Heart left ventricle (tissue), 16 donors: ENCODE measurements at regions of chr1 and their contacts with region 1.

Region 1: GRCh38 chr1:185984113-185984836 is 250.1 kb downstream of the HMCN1 start:
- DNase-seq: peak in 1 of 5 donors; percentile 11
- ATAC-seq: peak; percentile 69 to 92 (median 87)
- H3K4me3 ChIP-seq: no peak overlapping the region
- H3K27ac ChIP-seq: peak overlapping the region in 11 of 12 donors; percentile 6 to 74 (median 23)
- H3K4me1 ChIP-seq: peaks cover 0 to 20% (median 9%) of the 10 kb centered on the region in 12 donors
- H3K27me3 ChIP-seq: no peaks in the 10 kb centered on the region
- CTCF ChIP-seq: no peak
- POLR2A ChIP-seq: no peak

Region 2: DNA sequence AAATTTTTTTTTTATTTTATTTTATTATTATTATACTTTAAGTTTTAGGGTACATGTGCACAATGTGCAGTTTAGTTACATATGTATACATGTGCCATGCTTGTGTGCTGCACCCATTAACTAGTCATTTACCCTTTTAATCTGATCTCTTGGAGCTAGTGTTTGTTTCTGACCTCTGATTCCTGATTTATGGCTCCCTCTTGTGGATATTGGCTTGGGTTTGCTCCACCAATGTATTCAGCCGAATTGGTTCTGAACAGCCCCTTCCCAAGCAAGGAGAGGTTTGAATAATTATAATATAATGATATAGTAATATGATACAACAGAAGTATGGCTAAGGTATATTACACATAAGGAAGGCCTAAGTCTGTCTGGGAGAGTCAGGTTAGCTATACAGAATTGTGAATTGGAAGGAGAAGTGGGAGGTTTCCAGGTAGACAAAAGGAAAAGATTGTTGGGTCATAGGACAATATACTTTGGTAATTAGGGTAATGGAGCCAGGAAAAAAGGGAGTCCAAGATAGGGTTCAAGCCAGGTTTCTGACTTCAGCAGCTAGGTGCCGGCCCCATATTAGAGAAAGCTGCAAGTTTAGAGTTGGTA is 303.1 kb before region 1 on chr1:
- intact Hi-C with region 1: no loop called
- DNase-seq: peak in 1 of 5 donors; percentile 25
- ATAC-seq: peak; percentile 62 to 85 (median 68)
- H3K4me3 ChIP-seq: no peak overlapping the region
- H3K27ac ChIP-seq: no peak overlapping the region
- H3K4me1 ChIP-seq: peaks cover 0 to 42% (median 7%) of the 10 kb centered on the region in 12 donors
- H3K27me3 ChIP-seq: no peaks in the 10 kb centered on the region
- CTCF ChIP-seq: peak; percentile 52 to 77 (median 66)
- POLR2A ChIP-seq: no peak

Region 3: GRCh38 chr1:185813401-185813979 is 170.8 kb before region 1 on chr1:
- intact Hi-C with region 1: loop called in 1 of 10 experiments (anchors 10 kb)
- DNase-seq: no peak
- ATAC-seq: no peak
- H3K4me3 ChIP-seq: no peak overlapping the region
- H3K27ac ChIP-seq: no peak overlapping the region
- H3K4me1 ChIP-seq: peaks cover 0 to 7% (median 0%) of the 10 kb centered on the region in 12 donors
- H3K27me3 ChIP-seq: no peaks in the 10 kb centered on the region
- CTCF ChIP-seq: peak; percentile 33 to 74 (median 52)
- POLR2A ChIP-seq: no peak

Region 4: GRCh38 chr1:185837711-185838498 is 146.4 kb before region 1 on chr1:
- intact Hi-C with region 1: no loop called
- DNase-seq: peak in 1 of 5 donors; percentile 23
- ATAC-seq: no peak
- H3K4me3 ChIP-seq: no peak overlapping the region
- H3K27ac ChIP-seq: no peak overlapping the region
- H3K4me1 ChIP-seq: peaks cover 0 to 7% (median 0%) of the 10 kb centered on the region in 12 donors
- H3K27me3 ChIP-seq: no peaks in the 10 kb centered on the region
- CTCF ChIP-seq: no peak
- POLR2A ChIP-seq: no peak

Region 5: DNA sequence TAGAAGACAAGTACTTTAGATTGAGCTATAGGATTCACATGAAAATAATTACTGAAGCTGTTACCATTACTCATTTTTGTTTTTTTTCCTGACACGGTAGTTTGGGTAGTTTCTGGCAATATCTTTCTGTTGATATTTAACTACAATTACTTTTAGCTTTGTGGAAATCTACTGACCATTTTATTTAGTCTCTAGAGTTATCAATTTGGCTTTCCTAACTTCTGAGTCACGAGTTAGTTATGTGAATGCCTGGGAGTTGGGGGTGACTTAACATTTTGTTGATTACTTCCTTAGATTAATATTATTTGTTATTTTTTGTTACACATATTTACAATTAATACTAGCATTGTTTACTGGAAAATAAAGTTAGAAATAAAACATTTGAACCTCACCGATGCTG is 89.5 kb before region 1 on chr1:
- intact Hi-C with region 1: no loop called
- DNase-seq: no peak
- ATAC-seq: peak in 1 of 4 donors; percentile 33
- H3K4me3 ChIP-seq: no peak overlapping the region
- H3K27ac ChIP-seq: peak overlapping the region in 1 of 12 donors; percentile 2
- H3K4me1 ChIP-seq: peaks cover 0 to 2% (median 0%) of the 10 kb centered on the region in 12 donors
- H3K27me3 ChIP-seq: no peaks in the 10 kb centered on the region
- CTCF ChIP-seq: no peak
- POLR2A ChIP-seq: no peak

Region 6: GRCh38 chr1:185934476-185935189 is 49.6 kb before region 1 on chr1:
- intact Hi-C with region 1: loop called in 1 of 10 experiments (anchors 10 kb)
- DNase-seq: no peak
- ATAC-seq: no peak
- H3K4me3 ChIP-seq: no peak overlapping the region
- H3K27ac ChIP-seq: no peak overlapping the region
- H3K4me1 ChIP-seq: peaks cover 0 to 17% (median 0%) of the 10 kb centered on the region in 12 donors
- H3K27me3 ChIP-seq: no peaks in the 10 kb centered on the region
- CTCF ChIP-seq: no peak
- POLR2A ChIP-seq: no peak

Region 7: DNA sequence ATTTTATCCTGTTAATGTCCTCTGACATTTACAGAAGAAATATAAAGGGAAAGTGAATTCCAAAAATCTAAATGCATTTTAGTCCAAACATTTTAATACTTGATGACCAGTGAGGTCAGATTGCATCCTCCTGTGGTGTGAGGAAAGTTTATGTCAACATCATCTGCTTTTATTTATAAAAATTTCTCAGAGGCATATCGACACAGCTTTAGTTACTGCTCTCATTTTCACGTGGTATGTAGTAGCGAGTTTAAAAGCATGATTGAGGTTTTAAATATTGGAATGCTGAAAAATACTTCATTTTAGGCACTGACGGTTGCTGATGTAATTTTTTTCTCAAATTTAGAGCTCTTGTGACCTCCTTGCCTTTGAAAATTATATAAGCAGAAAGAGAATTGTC is 15.2 kb before region 1 on chr1:
- intact Hi-C with region 1: loop called in 1 of 10 experiments (anchors 2 kb)
- DNase-seq: no peak
- ATAC-seq: no peak
- H3K4me3 ChIP-seq: no peak overlapping the region
- H3K27ac ChIP-seq: peak overlapping the region in 10 of 12 donors; percentile 21 to 75 (median 46)
- H3K4me1 ChIP-seq: peaks cover 0 to 54% (median 14%) of the 10 kb centered on the region in 12 donors
- H3K27me3 ChIP-seq: no peaks in the 10 kb centered on the region
- CTCF ChIP-seq: no peak
- POLR2A ChIP-seq: no peak

Region 8: DNA sequence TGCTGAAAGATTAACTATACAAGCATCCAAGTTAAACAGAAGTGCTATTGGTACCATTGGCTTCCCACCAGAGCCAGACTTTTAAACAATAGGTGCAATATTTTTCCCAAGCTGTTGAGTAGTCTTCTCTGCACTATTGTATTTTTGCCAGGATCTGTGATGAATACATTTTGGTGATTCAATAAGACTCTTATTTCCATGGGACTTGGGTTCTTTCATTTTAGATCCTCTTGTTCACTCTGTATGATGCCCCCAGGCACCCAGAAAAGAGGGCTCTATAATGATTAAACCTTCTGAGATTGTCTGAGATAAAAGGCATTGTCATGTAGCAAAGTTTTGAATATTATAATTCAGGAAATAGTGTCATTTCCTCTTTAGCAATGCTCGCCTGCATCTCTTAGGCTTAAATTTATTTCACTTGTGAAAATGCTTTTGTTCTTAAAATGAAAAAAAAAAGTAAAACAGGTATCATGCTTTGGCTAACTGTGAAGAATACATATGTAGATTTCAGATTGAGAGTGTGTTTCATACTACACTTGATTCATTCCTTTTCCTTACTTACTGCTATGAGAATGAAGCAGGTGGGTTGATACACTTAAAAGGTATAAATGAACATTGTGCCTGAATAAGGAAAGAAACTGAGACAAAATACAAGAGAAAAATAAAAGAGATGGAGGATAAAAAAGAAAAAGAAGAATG is 24.9 kb after region 1 on chr1:
- intact Hi-C with region 1: loop called in 1 of 10 experiments (anchors 2 kb)
- DNase-seq: peak in 2 of 5 donors; percentile 12 to 23
- ATAC-seq: peak in 2 of 4 donors; percentile 59 to 74
- H3K4me3 ChIP-seq: no peak overlapping the region
- H3K27ac ChIP-seq: peak overlapping the region in 10 of 12 donors; percentile 7 to 52 (median 44)
- H3K4me1 ChIP-seq: peaks cover 0 to 15% (median 0%) of the 10 kb centered on the region in 12 donors
- H3K27me3 ChIP-seq: no peaks in the 10 kb centered on the region
- CTCF ChIP-seq: no peak
- POLR2A ChIP-seq: no peak

Region 9: GRCh38 chr1:186033744-186034345 is 49.6 kb after region 1 on chr1:
- intact Hi-C with region 1: loop called in 1 of 10 experiments (anchors 10 kb)
- DNase-seq: peak in 1 of 5 donors; percentile 38
- ATAC-seq: peak in 3 of 4 donors; percentile 50 to 77 (median 75)
- H3K4me3 ChIP-seq: no peak overlapping the region
- H3K27ac ChIP-seq: peak overlapping the region in 4 of 12 donors; percentile 4 to 59 (median 34)
- H3K4me1 ChIP-seq: peaks cover 0 to 7% (median 0%) of the 10 kb centered on the region in 12 donors
- H3K27me3 ChIP-seq: no peaks in the 10 kb centered on the region
- CTCF ChIP-seq: no peak
- POLR2A ChIP-seq: no peak

Region 10: DNA sequence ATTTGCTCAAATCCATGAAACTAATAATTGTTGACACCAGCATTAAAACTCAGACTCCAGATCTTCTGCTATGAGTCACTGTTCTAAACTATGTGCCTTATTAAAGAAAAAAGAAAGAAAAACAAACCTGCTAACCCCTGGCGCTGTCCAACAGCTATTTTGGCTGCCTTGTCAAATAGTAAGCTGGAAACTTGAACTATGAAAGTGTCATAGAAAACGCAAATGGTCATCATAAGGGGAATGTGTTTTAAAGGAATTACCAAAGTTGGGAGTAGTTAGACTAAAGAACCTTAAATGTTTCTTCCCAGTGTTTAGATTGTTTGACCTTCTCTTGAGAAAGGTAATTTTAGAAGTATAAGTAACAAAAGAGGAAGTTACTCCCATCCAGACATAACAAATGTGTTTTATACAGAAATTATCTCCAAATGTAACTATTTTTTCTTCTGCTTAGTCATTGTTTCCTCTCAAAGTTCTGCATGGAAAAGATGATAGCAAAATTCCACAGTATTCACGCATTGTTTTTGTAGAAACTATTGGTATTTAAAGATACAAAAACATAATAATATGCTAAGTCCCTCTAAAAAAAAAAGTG is 118.4 kb after region 1 on chr1:
- intact Hi-C with region 1: no loop called
- DNase-seq: peak in 4 of 5 donors; percentile 21 to 30 (median 26)
- ATAC-seq: peak in 3 of 4 donors; percentile 66 to 89 (median 87)
- H3K4me3 ChIP-seq: no peak overlapping the region
- H3K27ac ChIP-seq: peak overlapping the region in 11 of 12 donors; percentile 1 to 66 (median 26)
- H3K4me1 ChIP-seq: peaks cover 0 to 20% (median 3%) of the 10 kb centered on the region in 12 donors
- H3K27me3 ChIP-seq: no peaks in the 10 kb centered on the region
- CTCF ChIP-seq: no peak
- POLR2A ChIP-seq: no peak